Heart left ventricle (tissue), 16 donors: ENCODE measurements at regions of chr15 and their contacts with region 1.

Region 1: GRCh38 chr15:63638839-63639238 is 41.7 kb downstream of the FBXL22 start:
- DNase-seq: no peak
- ATAC-seq: no peak
- H3K4me3 ChIP-seq: no peak overlapping the region
- H3K27ac ChIP-seq: no peak overlapping the region
- H3K4me1 ChIP-seq: peaks cover 0 to 5% (median 0%) of the 10 kb centered on the region in 12 donors
- H3K27me3 ChIP-seq: no peaks in the 10 kb centered on the region
- CTCF ChIP-seq: no peak
- POLR2A ChIP-seq: no peak

Region 2: GRCh38 chr15:63672775-63673174 is 33.9 kb after region 1 on chr15:
- intact Hi-C with region 1: loop called in 1 of 10 experiments (anchors 5 kb)
- DNase-seq: no peak
- ATAC-seq: no peak
- H3K4me3 ChIP-seq: no peak overlapping the region
- H3K27ac ChIP-seq: no peak overlapping the region
- H3K4me1 ChIP-seq: peaks cover 0 to 16% (median 0%) of the 10 kb centered on the region in 12 donors
- H3K27me3 ChIP-seq: no peaks in the 10 kb centered on the region
- CTCF ChIP-seq: no peak
- POLR2A ChIP-seq: no peak

Region 3: DNA sequence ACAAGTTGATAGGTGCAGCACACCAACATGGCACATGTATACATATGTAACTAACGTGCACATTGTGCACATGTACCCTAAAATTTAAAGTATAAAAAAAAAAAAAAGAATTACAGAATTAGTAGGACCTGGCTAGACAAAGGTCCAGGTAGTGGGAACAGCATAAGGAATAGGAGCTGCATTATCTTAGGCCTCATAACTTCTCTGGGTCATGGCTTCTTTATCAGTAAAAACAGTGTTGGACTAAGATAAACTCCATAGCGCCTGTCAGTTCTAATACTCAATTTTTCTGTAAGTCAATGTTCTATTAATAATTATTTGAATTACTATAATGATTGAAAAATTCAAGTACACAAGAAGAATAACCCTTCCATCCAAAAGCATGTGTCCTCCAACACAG is 96.6 kb after region 1 on chr15:
- intact Hi-C with region 1: loop called in 1 of 10 experiments (anchors 10 kb)
- DNase-seq: no peak
- ATAC-seq: no peak
- H3K4me3 ChIP-seq: no peak overlapping the region
- H3K27ac ChIP-seq: no peak overlapping the region
- H3K4me1 ChIP-seq: no peaks in the 10 kb centered on the region
- H3K27me3 ChIP-seq: no peaks in the 10 kb centered on the region
- CTCF ChIP-seq: no peak
- POLR2A ChIP-seq: no peak

Region 4: DNA sequence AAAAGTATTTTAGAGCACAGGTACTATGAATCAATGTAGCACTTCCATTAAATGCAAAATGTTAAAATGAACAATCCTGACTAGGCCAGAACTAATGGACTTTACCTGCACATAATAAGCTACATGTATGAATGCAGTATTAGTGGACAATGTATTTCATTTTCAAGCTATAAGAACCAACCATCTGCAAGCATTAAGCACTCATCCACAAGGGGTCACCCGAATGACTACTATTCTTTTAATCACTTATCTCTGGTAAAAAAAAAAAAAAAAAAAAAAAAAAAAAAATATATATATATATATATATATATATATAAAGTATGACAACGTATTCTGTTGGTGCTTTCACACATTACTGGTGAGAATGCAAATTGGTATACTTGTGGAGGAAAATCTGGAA is 187.7 kb after region 1 on chr15:
- intact Hi-C with region 1: no loop called
- DNase-seq: no peak
- ATAC-seq: no peak
- H3K4me3 ChIP-seq: no peak overlapping the region
- H3K27ac ChIP-seq: no peak overlapping the region
- H3K4me1 ChIP-seq: peaks cover 0 to 55% (median 35%) of the 10 kb centered on the region in 12 donors
- H3K27me3 ChIP-seq: no peaks in the 10 kb centered on the region
- CTCF ChIP-seq: peak in 5 of 12 donors; percentile 15 to 31 (median 19)
- POLR2A ChIP-seq: no peak